GM18951 (cell line): ENCODE measurements at regions of chr12 and their contacts with region 1.

Region 1: GRCh38 chr12:10140001-10140400 is 10.0 kb upstream of the CLEC7A start:
- POLR2A ChIP-seq: no peak

Region 2: GRCh38 chr12:9647825-9648700 is 491.9 kb before region 1 on chr12:
- in situ Hi-C with region 1: loop called (anchors 25 kb)
- POLR2A ChIP-seq: peak; percentile 76

Region 3: GRCh38 chr12:9813821-9814809 is 325.9 kb before region 1 on chr12:
- in situ Hi-C with region 1: loop called (anchors 25 kb)
- POLR2A ChIP-seq: no peak

Region 4: GRCh38 chr12:9940375-9940774 is 199.6 kb before region 1 on chr12:
- in situ Hi-C with region 1: no loop called
- POLR2A ChIP-seq: no peak

Region 5: GRCh38 chr12:10027721-10028120 is 112.3 kb before region 1 on chr12:
- in situ Hi-C with region 1: loop called (anchors 10 kb)
- POLR2A ChIP-seq: no peak